ENCODE measurements at regions of chr3 and their contacts with region 1.

Region 1: GRCh38 chr3:150495563-150496168 is 50.6 kb downstream of the SERP1 start:
- DNase-seq: peak; percentile 71
- H3K4me3 Mint-ChIP-seq: no peak overlapping the region
- H3K27ac Mint-ChIP-seq: no peak overlapping the region
- H3K4me1 Mint-ChIP-seq: peaks cover 17% of the 10 kb centered on the region
- H3K27me3 Mint-ChIP-seq: no peaks in the 10 kb centered on the region
- CTCF ChIP-seq: peak; percentile 64

Region 2: DNA sequence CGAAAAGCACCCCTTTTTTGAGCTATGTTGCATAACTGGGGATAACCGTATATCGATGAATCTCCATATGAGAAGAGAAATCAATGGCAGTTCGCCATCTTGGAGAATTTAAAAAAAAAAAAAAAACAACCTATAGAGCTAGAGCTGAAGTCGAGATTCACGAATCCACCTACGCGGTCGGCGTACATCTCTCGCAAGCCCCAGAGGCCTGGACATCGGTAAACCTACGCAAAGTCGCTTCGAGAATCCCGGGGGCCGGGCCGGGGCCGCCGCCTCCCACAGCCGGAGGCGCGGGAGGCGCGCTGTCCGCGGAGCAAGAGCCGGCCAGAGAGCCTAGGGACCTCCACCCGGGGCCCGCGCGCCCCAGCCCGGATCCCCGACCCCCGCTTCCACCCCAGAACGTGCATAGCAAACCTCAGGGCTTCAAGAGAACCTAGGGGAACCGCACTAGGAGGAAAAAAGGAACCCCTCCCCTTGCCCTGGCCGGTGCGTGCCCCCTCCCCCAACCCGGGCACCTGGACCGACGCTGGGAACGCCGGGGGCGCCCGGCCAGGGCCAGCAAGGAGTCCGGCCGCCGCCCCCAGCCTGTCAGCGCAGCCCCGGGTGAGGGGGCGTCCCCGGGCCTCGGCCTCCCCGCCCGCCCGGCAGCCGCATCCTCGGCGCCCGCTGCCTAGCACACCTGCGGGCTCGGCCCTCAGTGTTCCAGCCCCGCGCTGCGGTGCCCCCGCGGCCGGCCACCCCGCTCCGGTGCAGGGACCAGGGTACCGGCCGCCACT is 525.5 kb before region 1 on chr3:
- CTCF ChIA-PET with region 1: interaction called, 4 read pairs
- POLR2A ChIA-PET with region 1: interaction called, 4 read pairs
- intact Hi-C with region 1: loop called (anchors 5 kb)
- DNase-seq: peak; percentile 80
- H3K4me3 Mint-ChIP-seq: peak overlapping the region; percentile 80
- H3K27ac Mint-ChIP-seq: peak overlapping the region; percentile 84
- H3K4me1 Mint-ChIP-seq: peaks cover 28% of the 10 kb centered on the region
- H3K27me3 Mint-ChIP-seq: no peaks in the 10 kb centered on the region
- CTCF ChIP-seq: no peak

Region 3: GRCh38 chr3:150238998-150239619 is 256.6 kb before region 1 on chr3:
- CTCF ChIA-PET with region 1: interaction called, 54 read pairs
- POLR2A ChIA-PET with region 1: interaction called, 16 read pairs
- intact Hi-C with region 1: loop called (anchors 1 kb)
- DNase-seq: peak; percentile 60
- H3K4me3 Mint-ChIP-seq: no peak overlapping the region
- H3K27ac Mint-ChIP-seq: peak overlapping the region; percentile 83
- H3K4me1 Mint-ChIP-seq: peaks cover 27% of the 10 kb centered on the region
- H3K27me3 Mint-ChIP-seq: no peaks in the 10 kb centered on the region
- CTCF ChIP-seq: peak; percentile 32

Region 4: GRCh38 chr3:150335631-150336030 is 160.0 kb before region 1 on chr3:
- CTCF ChIA-PET with region 1: no interaction called
- POLR2A ChIA-PET with region 1: no interaction called
- intact Hi-C with region 1: no loop called
- DNase-seq: no peak
- H3K4me3 Mint-ChIP-seq: no peak overlapping the region
- H3K27ac Mint-ChIP-seq: no peak overlapping the region
- H3K4me1 Mint-ChIP-seq: no peaks in the 10 kb centered on the region
- H3K27me3 Mint-ChIP-seq: no peaks in the 10 kb centered on the region
- CTCF ChIP-seq: no peak

Region 5: GRCh38 chr3:150348500-150348899 is 147.2 kb before region 1 on chr3:
- CTCF ChIA-PET with region 1: interaction called, 13 read pairs
- POLR2A ChIA-PET with region 1: interaction called, 13 read pairs
- intact Hi-C with region 1: no loop called
- DNase-seq: peak; percentile 93
- H3K4me3 Mint-ChIP-seq: peak overlapping the region; percentile 8
- H3K27ac Mint-ChIP-seq: peak overlapping the region; percentile 91
- H3K4me1 Mint-ChIP-seq: peaks cover 50% of the 10 kb centered on the region
- H3K27me3 Mint-ChIP-seq: no peaks in the 10 kb centered on the region
- CTCF ChIP-seq: no peak

Region 6: GRCh38 chr3:150469031-150469942 is 26.4 kb before region 1 on chr3:
- CTCF ChIA-PET with region 1: interaction called, 4 read pairs
- POLR2A ChIA-PET with region 1: interaction called, 15 read pairs
- intact Hi-C with region 1: no loop called
- DNase-seq: peak; percentile 96
- H3K4me3 Mint-ChIP-seq: peak overlapping the region; percentile 70
- H3K27ac Mint-ChIP-seq: peak overlapping the region; percentile 93
- H3K4me1 Mint-ChIP-seq: peaks cover 28% of the 10 kb centered on the region
- H3K27me3 Mint-ChIP-seq: no peaks in the 10 kb centered on the region
- CTCF ChIP-seq: no peak

Region 7: DNA sequence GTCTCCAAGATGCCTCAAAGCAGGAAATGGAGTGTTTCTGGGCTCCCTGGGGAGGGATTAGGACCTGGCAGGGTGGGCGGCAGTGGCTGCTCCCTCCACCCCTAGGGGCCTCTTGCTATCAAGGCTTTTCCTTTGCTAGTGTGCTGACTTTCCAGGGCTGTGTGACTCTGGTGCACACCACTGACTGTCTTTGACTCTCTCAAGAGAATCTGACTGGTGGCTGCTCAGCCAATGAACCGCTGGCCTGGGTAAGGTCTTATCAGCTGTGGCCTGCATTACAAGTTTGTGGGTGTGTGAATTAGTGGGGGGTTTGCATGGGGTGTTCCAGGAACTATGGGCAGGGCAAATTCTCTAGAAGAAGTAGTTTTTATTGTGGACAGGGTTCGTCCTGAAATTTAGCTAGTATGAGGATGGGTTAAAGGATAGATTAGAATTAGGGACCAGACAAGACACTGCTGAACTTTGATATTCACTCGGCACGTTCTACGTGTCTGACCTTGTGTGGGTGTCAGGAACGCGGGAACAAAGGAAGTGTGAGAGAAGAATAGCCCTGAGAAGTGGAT is 237.8 kb after region 1 on chr3:
- CTCF ChIA-PET with region 1: no interaction called
- POLR2A ChIA-PET with region 1: no interaction called
- intact Hi-C with region 1: no loop called
- DNase-seq: no peak
- H3K4me3 Mint-ChIP-seq: no peak overlapping the region
- H3K27ac Mint-ChIP-seq: no peak overlapping the region
- H3K4me1 Mint-ChIP-seq: peaks cover 34% of the 10 kb centered on the region
- H3K27me3 Mint-ChIP-seq: no peaks in the 10 kb centered on the region
- CTCF ChIP-seq: no peak

Measured in MCF 10A (cell line).